ENCODE measurements at regions of chr6 and their contacts with region 1.

Region 1: GRCh38 chr6:39228992-39229767 is at the start of gene KCNK5:
- DNase-seq: peak; percentile 73
- ATAC-seq: peak; percentile 99
- H3K4me3 ChIP-seq: peak within 1 kb of the TSS; percentile 75 to 88
- H3K27ac ChIP-seq: peak within 1 kb of the TSS; percentile 53; the same call in 1 of the 2 replicates
- H3K4me1 ChIP-seq: peaks cover 9 to 41% of the 10 kb centered on the region in 2 experiments; a peak in 3 of 4 replicates
- H3K27me3 ChIP-seq: no peaks in the 10 kb centered on the region
- CTCF ChIP-seq: peak; percentile 80 to 89 (median 88)
- POLR2A ChIP-seq: peak; percentile 79
- RAD21 ChIP-seq: peak; percentile 76
- total RNA-seq, gene KCNK5: 9.5 TPM

Region 2: GRCh38 chr6:39178235-39178634 is 50.9 kb before region 1 on chr6:
- CTCF ChIA-PET with region 1: no interaction called
- POLR2A ChIA-PET with region 1: no interaction called
- RAD21 ChIA-PET with region 1: no interaction called
- intact Hi-C with region 1: loop called (anchors 5 kb)
- DNase-seq: no peak
- ATAC-seq: no peak
- H3K4me3 ChIP-seq: no peak overlapping the region
- H3K27ac ChIP-seq: no peak overlapping the region
- H3K4me1 ChIP-seq: peaks cover 0 to 5% of the 10 kb centered on the region in 2 experiments; a peak in 1 of 4 replicates
- H3K27me3 ChIP-seq: no peaks in the 10 kb centered on the region
- CTCF ChIP-seq: no peak
- POLR2A ChIP-seq: no peak
- RAD21 ChIP-seq: no peak

Measured in HCT116 (cell line).